ENCODE measurements at regions of chr18 and their contacts with region 1.

Region 1: DNA sequence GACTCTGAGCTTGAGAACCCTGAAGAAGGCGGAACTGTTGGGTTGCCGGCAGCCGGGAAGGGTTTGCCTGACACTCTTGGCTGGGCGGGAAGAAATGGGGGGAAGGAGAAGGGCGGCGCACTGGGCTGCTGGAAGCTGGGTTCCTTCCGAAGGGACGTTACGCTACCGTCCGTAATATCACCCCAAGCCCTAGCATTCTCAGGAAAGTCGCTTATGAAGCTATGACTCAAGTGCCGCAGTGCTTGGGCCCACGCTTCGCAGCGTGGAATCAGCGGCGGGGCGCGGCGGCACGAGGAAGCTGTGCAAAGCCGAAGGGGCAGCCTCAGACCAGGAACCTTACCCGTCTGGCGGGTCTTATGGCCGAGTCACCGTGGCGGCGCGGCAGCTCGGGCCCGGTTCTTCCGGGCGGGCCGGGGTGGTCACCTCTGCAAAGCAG is 50.2 kb upstream of the SIGLEC15 start:
- DNase-seq: peak; percentile 77 to 88 (median 81)
- ATAC-seq: peak; percentile 71 to 95 (median 94)
- H3K4me3 ChIP-seq: peak overlapping the region; percentile 40 to 90 (median 70)
- H3K27ac ChIP-seq: peak overlapping the region; percentile 54 to 89 (median 74)
- H3K4me1 ChIP-seq: peaks cover 0 to 18% (median 7%) of the 10 kb centered on the region in 12 donors
- H3K27me3 ChIP-seq: peaks cover 0 to 6% (median 0%) of the 10 kb centered on the region in 9 donors
- CTCF ChIP-seq: no peak
- POLR2A ChIP-seq: peak in 1 of 2 donors; percentile 43

Region 2: GRCh38 chr18:45738658-45739057 is 36.6 kb before region 1 on chr18:
- intact Hi-C with region 1: loop called in 2 of 10 experiments (anchors 5 kb)
- DNase-seq: no peak
- ATAC-seq: peak in 1 of 4 donors; percentile 14
- H3K4me3 ChIP-seq: no peak overlapping the region
- H3K27ac ChIP-seq: peak overlapping the region in 3 of 12 donors; percentile 2 to 75 (median 51)
- H3K4me1 ChIP-seq: peaks cover 0 to 12% (median 3%) of the 10 kb centered on the region in 12 donors
- H3K27me3 ChIP-seq: no peaks in the 10 kb centered on the region
- CTCF ChIP-seq: peak in 1 of 12 donors; percentile 9
- POLR2A ChIP-seq: no peak

Region 3: DNA sequence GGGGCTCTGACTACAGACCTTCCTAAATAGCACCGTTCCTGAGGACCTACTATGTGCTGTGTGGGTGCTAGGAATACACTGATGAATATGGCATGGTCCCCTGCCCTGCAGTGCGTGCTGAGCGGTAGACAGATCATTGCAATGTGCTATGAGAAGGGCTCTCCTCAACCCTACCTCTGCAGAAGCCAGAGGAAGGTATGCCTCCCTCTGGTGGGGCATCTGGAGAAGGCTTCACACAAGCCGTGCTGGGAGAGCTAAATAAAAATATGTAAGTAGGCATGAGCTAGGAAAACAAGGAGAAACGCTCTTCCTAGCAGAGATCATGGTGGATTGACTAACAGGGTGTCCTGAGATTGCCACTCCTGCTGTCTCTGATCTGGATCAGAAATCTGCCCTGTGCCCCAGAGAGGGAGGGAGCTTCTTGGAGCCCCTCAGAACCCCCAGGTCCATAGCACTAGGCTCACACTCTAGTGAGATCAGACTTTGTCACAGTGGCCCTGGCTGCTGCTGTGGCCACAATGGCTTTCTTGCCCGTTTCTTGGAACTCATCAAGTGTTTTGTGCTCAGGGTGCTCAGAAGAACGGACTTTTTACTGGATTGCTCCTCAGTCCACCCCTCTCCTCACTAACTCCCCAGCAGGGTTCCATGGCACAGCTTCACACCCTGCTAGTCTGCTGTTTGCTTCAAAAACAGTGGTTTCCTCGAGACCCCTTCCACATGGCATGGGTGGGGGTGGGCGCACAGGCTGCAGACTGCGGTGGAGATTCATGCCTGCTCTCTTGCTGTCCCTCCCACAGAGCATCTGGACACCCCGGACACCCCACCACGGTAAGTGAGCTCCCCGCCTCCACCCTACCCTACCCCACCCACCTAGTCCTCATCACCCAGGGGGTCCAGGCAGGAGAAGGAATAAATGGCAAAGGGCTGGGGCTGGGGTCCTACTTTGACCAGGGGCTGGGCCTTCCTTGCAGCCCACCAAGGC is 64.4 kb after region 1 on chr18:
- intact Hi-C with region 1: loop called in 1 of 10 experiments (anchors 10 kb)
- DNase-seq: no peak
- ATAC-seq: peak; percentile 13 to 83 (median 78)
- H3K4me3 ChIP-seq: no peak overlapping the region
- H3K27ac ChIP-seq: no peak overlapping the region
- H3K4me1 ChIP-seq: peaks cover 0 to 27% (median 14%) of the 10 kb centered on the region in 12 donors
- H3K27me3 ChIP-seq: peaks cover 7 to 39% (median 30%) of the 10 kb centered on the region in 9 donors
- CTCF ChIP-seq: peak; percentile 41 to 68 (median 54)
- POLR2A ChIP-seq: no peak

Region 4: DNA sequence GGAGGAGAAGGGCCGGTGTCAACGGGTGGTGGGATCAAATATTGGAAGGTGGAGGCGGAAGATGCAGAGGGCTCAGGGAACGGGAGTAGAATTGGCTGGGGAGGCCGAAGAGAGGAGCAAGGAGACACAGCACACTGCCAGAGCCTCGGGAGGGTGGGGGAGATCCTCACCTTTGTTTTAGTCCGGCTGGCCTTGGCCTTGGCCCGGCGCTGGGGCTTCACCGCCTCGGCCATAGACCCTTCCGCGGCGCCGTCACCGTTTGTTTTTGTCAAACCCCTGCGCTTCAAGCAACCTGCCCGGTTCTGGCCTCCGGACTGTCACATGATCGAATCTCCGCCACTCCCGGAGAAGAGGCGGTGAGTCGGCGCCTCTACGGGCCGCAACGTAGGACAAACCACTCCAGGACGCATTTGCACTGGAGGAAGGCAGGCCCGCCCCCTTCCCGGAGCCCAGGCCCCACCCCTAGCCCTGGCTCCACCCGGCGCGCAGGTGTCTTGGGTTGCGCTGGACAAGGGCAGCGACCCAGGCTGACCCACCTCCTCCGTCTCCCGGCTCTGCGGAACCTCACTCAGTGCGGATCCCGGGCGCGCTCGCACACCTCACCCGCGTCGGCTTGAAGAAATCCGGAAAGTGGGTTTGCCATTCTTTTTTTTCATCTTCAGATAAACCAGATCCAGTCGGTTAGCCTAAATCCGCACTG is 191.9 kb after region 1 on chr18 and contains the start of gene EPG5:
- intact Hi-C with region 1: no loop called
- DNase-seq: peak; percentile 95 to 97 (median 96)
- ATAC-seq: peak; percentile 99 to 100 (median 100)
- H3K4me3 ChIP-seq: peak within 1 kb of the TSS; percentile 52 to 96 (median 80)
- H3K27ac ChIP-seq: peak within 1 kb of the TSS in 11 of 12 donors; percentile 32 to 80 (median 66)
- H3K4me1 ChIP-seq: peaks cover 0 to 40% (median 16%) of the 10 kb centered on the region in 12 donors
- H3K27me3 ChIP-seq: no peaks in the 10 kb centered on the region
- CTCF ChIP-seq: no peak
- POLR2A ChIP-seq: peak in 1 of 2 donors; percentile 61
- total RNA-seq, gene EPG5: 14.4 to 37.8 (median 23.8) TPM

Measured in heart left ventricle (tissue), 16 donors.